ENCODE measurements at regions of chr7 and their contacts with region 1.

Region 1: DNA sequence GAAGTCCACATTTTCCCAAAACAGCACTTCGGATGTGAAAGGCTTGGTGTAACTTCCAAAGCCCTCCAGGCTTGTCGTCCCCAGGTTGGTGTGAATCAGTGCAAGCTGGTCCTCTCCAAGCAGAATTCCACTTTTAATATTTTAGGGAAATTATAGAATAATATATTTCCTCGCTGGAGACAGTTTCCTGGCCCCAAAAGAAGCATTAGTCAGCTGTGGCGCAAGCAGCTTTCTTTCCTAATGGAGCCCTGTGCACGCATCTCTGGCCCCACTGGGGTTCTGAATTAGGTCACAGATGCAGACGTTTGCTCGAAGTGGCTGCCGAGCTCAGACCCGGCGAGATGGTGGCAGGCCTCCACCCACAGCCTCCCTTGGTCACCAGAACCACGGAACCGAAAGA is 33.3 kb upstream of the MNX1 start:
- DNase-seq: peak; percentile 28 to 58
- ATAC-seq: peak; percentile 72 to 74
- H3K4me3 ChIP-seq: no peak overlapping the region
- H3K27ac ChIP-seq: peak overlapping the region in 1 of 4 donors; percentile 31
- H3K4me1 ChIP-seq: no peaks in the 10 kb centered on the region
- H3K27me3 ChIP-seq: peaks cover 0 to 5% (median 3%) of the 10 kb centered on the region in 3 donors
- CTCF ChIP-seq: no peak
- POLR2A ChIP-seq: no peak

Region 2: DNA sequence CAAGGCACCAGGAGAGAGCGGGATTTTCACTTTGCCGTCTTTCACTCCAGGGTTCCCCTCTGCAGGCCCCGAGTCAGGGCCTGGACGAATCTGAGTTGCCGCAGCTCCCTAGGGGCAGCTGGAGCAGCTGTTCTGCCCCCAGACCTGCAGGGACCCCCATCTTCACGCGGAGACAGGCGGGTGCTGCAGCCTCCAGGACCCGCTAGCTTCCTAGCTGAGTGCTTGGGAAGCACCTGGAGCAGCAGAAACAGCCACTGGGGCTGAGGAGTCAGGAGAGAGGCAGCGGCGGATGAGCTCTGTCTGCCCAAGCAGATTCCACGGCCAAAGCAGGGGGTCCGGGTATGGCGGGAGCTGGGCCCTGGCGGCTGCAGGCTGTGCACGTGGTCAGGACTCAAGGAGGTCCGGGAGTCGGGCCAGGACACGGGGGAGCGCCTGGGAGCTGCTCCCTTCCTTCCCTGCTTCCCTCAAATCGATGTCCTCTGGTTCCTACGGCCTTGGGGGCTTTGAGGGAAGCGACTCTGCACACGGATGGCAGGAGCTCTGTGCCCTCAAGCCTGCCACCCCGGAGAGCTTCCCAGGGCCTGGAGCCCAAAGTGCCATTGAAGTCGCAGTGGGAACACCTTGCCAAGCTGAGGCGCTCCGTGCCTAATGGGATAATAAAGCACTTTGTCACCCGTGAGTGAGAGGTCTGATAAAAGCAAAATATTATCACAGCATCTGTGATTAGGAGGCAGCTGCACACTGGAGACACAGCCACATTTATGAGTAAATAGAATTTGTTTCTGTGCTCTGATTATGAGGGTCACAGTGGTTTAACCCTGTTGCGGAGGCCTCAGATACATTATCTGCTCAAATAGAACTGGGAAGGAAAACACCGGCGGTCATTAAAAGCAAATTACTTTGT is 50.5 kb before region 1 on chr7:
- in situ Hi-C with region 1: no loop called
- intact Hi-C with region 1: loop called (anchors 5 kb)
- DNase-seq: no peak
- ATAC-seq: no peak
- H3K4me3 ChIP-seq: no peak overlapping the region
- H3K27ac ChIP-seq: no peak overlapping the region
- H3K4me1 ChIP-seq: no peaks in the 10 kb centered on the region
- H3K27me3 ChIP-seq: peaks cover 15 to 37% (median 35%) of the 10 kb centered on the region in 3 donors
- CTCF ChIP-seq: no peak
- POLR2A ChIP-seq: no peak

Measured in gastrocnemius medialis (tissue), 4 donors.